Activated B cell treated with CpG ODN at 0.5 μM for 24 hours (primary cell): ENCODE measurements at regions of chr10 and their contacts with region 1.

Region 1: GRCh38 chr10:73837072-73837471 is 25.7 kb upstream of the NDST2 start:
- DNase-seq: no peak
- ATAC-seq: no peak
- H3K4me3 Mint-ChIP-seq: no peak overlapping the region
- H3K27ac Mint-ChIP-seq: no peak overlapping the region
- H3K4me1 Mint-ChIP-seq: no peaks in the 10 kb centered on the region
- H3K27me3 Mint-ChIP-seq: no peaks in the 10 kb centered on the region
- CTCF ChIP-seq: no peak

Region 2: DNA sequence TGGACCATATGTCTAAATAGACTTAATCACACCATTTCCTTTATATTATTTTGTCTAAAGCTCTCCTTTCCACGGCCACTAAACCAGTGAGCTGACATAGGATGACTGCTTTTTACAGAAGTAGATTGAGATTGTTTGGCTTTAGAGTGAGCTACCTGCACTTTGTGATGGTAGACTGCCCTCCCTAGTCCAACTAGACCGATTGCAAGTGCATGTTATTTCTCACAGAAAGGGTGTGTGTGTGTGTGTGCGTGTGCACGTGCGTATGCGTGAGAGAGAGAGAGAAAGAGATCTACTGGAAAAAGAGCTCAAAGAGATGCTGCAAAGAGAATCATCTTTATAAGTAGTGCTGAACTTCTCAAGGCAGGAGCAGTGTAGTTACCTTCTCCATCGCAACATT is 221.6 kb after region 1 on chr10:
- CTCF ChIA-PET with region 1: no interaction called
- POLR2A ChIA-PET with region 1: interaction called, 10 read pairs
- intact Hi-C with region 1: no loop called
- DNase-seq: no peak
- ATAC-seq: peak; percentile 73
- H3K4me3 Mint-ChIP-seq: no peak overlapping the region
- H3K27ac Mint-ChIP-seq: no peak overlapping the region
- H3K4me1 Mint-ChIP-seq: peaks cover 24% of the 10 kb centered on the region
- H3K27me3 Mint-ChIP-seq: no peaks in the 10 kb centered on the region
- CTCF ChIP-seq: no peak